Motor neuron (in vitro differentiated cells): ENCODE measurements at regions of chr9 and their contacts with region 1.

Region 1: DNA sequence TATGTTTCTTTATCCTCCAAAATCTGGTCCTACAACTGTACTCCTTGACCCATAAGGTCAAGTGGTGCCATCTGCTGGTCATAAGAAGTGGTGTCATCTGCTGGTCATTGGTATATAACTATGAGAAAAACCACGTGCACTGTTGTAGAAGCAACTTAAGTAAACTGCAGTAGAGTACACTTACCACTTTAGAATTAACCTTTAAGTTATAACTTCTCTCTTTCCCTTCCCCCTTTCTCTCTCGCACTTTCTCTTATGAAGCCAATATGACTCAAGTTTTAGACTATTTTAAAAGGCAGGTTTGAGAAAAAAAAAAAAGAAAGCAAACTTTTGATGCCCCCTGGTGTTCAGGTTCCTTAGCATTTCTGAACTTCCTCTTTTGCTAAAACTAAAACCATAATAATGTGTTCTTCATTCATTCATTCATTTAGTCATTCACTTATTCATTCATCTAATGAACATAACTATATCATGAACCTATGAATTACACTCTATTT is 12.8 kb upstream of the MTAP start:
- ATAC-seq: peak; percentile 76 to 100 (median 90)
- H3K4me3 ChIP-seq: peak overlapping the region in 1 of 5 donors; percentile 15
- H3K27ac ChIP-seq: no peak overlapping the region
- H3K4me1 ChIP-seq: no peaks in the 10 kb centered on the region

Region 2: GRCh38 chr9:21141427-21141882 is 648.1 kb before region 1 on chr9 and contains the start of gene IFNW1:
- in situ Hi-C with region 1: no loop called
- ATAC-seq: peak in 3 of 8 experiments; percentile 69 to 80 (median 75)
- H3K4me3 ChIP-seq: no peak within 1 kb of the TSS
- H3K27ac ChIP-seq: no peak within 1 kb of the TSS
- H3K4me1 ChIP-seq: no peaks in the 10 kb centered on the region
- total RNA-seq, gene IFNW1: 0.05 to 0.29 (median 0.13) TPM in 3 of 8 experiments, not detected in the others

Region 3: DNA sequence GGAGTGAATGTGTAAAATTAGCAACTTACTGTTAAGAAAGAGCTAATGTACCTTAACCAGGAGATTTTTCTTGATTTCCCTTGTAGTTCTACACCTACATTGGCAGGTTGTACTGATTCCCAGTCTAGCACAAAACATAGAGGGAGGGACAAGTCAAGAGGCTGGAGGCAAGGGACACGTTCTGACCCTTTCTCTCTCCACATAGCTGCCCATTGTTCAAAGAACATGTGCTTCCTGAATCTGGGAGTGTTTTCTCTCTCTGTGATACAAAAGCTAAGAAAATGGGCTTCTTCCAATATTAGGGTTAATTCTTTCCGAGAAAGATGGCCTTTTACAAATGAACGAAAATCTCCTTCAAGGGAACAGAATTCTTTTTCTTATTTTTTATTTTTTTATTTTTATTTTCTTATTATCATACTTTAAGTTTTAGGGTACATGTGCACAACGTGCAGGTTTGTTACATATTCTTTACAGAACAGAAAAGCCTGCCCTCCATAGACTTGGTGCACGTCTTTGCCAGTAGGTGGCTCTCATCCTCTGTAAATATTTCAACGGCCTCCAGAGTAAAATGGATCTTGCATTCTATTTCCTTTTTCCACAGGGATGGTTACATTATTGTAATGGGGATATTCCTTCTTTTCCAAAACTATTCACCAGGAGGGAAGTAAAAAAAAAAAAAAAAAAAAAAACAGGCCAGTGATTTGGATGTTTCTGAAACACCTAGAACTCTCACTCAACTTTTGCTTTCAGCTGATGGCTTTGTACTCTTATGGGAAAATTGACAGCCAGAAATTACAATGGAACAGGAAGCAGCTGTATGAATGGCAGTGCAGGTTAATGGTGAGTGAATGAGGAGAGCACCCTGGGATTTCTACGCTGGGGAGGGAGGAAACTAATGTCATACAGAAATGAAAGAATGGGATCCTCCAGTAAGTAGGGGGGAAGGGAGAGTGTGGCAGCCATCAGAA is 471.3 kb before region 1 on chr9:
- in situ Hi-C with region 1: loop called in 5 of 9 experiments (anchors 25 kb)
- ATAC-seq: peak; percentile 71 to 89 (median 77)
- H3K4me3 ChIP-seq: no peak overlapping the region
- H3K27ac ChIP-seq: no peak overlapping the region
- H3K4me1 ChIP-seq: peaks cover 3 to 4% of the 10 kb centered on the region in 2 donors

Region 4: GRCh38 chr9:21455320-21455719 is 334.3 kb before region 1 on chr9:
- in situ Hi-C with region 1: loop called in 4 of 9 experiments (anchors 10 to 25 kb)
- ATAC-seq: peak in 4 of 8 experiments; percentile 50 to 96 (median 90)
- H3K4me3 ChIP-seq: no peak overlapping the region
- H3K27ac ChIP-seq: no peak overlapping the region
- H3K4me1 ChIP-seq: no peaks in the 10 kb centered on the region

Region 5: DNA sequence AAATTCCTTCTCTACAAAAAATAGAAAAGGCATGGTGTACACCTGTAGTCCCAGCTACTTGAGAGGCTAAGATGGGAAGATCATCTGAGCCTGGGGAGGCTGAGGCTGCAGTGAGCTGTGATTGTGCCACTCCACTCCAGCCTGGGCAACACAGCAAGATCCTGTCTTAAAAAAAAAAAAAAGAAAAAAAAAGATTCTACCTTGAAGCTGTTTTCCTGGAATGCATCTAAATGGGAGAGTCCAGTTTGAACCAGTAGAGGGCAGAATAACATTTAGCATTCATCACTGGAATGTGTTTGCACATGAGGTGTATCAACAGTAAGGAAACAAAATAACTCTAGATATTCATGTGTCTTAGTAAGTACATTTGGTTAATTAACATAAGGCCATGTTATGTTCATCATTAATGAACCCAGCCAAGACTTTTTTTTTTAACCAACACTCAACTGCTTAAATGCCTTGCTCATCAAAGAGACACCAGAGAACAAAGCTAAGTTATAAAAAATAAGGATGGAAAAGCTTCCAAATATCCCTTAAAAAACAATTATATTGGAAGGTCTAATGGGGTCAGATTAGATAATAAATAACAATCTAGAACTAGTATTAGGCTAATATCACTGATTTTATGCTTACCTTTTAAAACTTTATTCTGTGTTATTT is 323.6 kb before region 1 on chr9:
- in situ Hi-C with region 1: loop called in 4 of 9 experiments (anchors 10 to 25 kb)
- ATAC-seq: peak in 3 of 8 experiments; percentile 90 to 98 (median 97)
- H3K4me3 ChIP-seq: no peak overlapping the region
- H3K27ac ChIP-seq: no peak overlapping the region
- H3K4me1 ChIP-seq: no peaks in the 10 kb centered on the region

Region 6: GRCh38 chr9:21591221-21592062 is 198.1 kb before region 1 on chr9:
- in situ Hi-C with region 1: loop called in 1 of 9 experiments (anchors 25 kb)
- ATAC-seq: peak in 7 of 8 experiments; percentile 77 to 100 (median 92)
- H3K4me3 ChIP-seq: no peak overlapping the region
- H3K27ac ChIP-seq: no peak overlapping the region
- H3K4me1 ChIP-seq: peaks cover 0 to 3% of the 10 kb centered on the region in 2 donors

Region 7: GRCh38 chr9:21709464-21710058 is 80.0 kb before region 1 on chr9:
- in situ Hi-C with region 1: loop called in 1 of 9 experiments (anchors 10 kb)
- ATAC-seq: peak in 3 of 8 experiments; percentile 23 to 57 (median 30)
- H3K4me3 ChIP-seq: no peak overlapping the region
- H3K27ac ChIP-seq: no peak overlapping the region
- H3K4me1 ChIP-seq: peaks cover 10 to 17% of the 10 kb centered on the region in 2 donors

Region 8: DNA sequence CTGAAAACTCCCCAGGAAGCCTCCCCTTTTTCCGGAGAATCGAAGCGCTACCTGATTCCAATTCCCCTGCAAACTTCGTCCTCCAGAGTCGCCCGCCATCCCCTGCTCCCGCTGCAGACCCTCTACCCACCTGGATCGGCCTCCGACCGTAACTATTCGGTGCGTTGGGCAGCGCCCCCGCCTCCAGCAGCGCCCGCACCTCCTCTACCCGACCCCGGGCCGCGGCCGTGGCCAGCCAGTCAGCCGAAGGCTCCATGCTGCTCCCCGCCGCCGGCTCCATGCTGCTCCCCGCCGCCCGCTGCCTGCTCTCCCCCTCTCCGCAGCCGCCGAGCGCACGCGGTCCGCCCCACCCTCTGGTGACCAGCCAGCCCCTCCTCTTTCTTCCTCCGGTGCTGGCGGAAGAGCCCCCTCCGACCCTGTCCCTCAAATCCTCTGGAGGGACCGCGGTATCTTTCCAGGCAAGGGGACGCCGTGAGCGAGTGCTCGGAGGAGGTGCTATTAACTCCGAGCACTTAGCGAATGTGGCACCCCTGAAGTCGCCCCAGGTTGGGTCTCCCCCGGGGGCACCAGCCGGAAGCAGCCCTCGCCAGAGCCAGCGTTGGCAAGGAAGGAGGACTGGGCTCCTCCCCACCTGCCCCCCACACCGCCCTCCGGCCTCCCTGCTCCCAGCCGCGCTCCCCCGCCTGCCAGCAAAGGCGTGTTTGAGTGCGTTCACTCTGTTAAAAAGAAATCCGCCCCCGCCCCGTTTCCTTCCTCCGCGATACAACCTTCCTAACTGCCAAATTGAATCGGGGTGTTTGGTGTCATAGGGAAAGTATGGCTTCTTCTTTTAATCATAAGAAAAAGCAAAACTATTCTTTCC is 185.2 kb after region 1 on chr9:
- in situ Hi-C with region 1: no loop called
- ATAC-seq: peak; percentile 79 to 95 (median 92)
- H3K4me3 ChIP-seq: peak overlapping the region; percentile 35 to 53 (median 39)
- H3K27ac ChIP-seq: no peak overlapping the region
- H3K4me1 ChIP-seq: peaks cover 0 to 3% of the 10 kb centered on the region in 2 donors

Region 9: DNA sequence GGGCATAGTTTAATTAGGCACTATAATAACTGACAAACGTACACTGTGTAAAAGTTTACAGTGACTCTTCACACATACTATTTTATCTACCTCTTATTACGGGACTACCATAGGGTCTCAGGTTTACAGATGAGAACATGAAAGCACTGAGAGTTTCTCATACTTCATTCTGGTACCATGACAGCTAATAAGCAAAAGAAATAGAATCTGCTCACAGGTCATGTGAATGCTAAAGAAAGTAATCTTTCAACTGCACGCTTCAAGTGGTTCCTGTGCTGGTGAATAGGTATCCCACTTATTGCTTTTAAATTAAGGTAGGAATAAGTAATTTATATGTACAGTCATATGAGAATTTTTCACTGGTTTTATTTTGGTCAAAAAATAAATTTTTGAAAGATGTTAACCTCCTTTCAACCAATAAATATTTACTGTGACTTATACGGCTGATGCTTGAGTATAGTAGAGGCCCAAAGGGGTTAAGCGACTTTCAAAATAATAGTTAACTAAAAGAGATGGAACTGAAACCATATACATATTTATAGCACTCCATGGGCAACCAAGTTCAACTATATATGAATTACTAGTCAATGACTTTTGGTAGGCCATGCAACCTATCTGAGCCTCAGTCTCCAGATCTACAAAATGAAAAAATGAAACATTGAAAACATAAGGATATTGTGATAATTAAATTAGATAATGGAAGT is 196.5 kb after region 1 on chr9:
- in situ Hi-C with region 1: no loop called
- ATAC-seq: no peak
- H3K4me3 ChIP-seq: no peak overlapping the region
- H3K27ac ChIP-seq: no peak overlapping the region
- H3K4me1 ChIP-seq: peaks cover 0 to 8% of the 10 kb centered on the region in 2 donors